Right ventricle myocardium superior (tissue), 1 donor: ENCODE measurements at regions of chr5 and their contacts with region 1.

Region 1: DNA sequence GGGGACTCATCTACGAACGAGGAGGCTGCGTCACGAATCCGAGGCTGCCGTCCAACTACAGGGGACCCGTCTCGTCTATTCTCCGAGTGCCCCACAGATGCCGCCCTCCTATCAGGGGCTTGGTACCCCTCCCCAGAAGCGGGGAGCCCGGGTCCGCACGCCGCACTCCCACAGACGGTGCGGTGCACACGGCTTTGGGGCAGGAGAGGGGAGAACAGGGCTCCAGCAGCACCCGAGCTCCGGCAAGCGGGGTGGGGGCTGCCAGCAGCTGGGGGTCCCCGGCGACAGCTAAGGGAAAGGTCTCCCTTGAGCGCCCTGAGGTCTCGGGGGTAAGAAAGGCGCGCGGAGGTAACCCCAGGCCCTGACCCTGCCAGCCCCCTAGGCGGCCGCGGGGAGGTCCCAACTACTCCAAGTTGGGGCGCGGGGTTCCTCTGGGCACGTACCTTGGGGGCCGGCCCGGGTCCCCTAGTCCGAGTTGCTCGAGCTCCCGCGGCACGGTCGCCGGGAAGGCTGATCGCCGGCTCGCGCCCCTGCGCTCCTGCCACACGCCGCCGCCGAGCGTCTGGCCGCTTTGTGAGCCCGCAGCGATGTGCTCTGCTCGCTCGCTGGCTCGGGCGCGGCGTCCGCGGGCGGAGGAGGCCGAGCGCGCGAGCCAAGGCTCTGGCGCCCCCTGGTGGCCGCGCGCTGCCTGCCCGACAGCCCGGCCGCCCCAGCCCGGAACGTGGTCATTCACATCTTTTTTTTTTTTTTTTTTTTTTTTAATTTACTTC is at the start of gene SPOCK1:
- DNase-seq: peak; percentile 85
- ATAC-seq: peak; percentile 98
- total RNA-seq, gene SPOCK1: 19.6 TPM

Region 2: GRCh38 chr5:137320056-137321045 is 178.6 kb before region 1 on chr5:
- intact Hi-C with region 1: loop called (anchors 1 kb)
- DNase-seq: no peak
- ATAC-seq: peak; percentile 43

Region 3: GRCh38 chr5:137344723-137345322 is 154.1 kb before region 1 on chr5:
- intact Hi-C with region 1: loop called (anchors 5 kb)
- DNase-seq: no peak
- ATAC-seq: no peak